ENCODE measurements at regions of chr17 and their contacts with region 1.

Region 1: DNA sequence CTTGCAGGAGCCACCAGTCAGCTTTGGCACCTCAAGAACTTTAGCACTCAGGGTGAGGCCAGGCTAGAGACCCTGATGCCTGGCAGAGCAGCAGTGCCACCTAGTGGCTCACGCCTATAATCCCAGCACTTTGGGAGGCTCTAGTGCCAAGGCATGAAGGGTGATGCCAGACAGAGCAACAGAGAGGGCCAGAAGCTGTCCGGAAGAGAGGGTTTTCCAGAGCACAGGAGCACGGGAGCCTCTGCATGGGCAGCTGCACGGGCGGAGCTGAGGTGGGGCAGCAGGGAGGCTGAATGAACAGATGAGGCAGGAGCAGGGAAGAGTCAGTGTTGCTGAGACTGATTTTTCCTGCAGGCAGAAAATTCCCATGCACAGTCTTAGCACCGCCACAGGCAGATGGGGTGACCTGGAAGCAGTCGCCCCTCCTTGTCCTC is 38.9 kb downstream of the MYH3 start:
- DNase-seq: peak; percentile 57
- ATAC-seq: peak; percentile 84
- H3K4me3 ChIP-seq: no peak overlapping the region
- H3K27ac ChIP-seq: no peak overlapping the region
- H3K4me1 ChIP-seq: peaks cover 3% of the 10 kb centered on the region; the same call in 1 of the 2 replicates
- H3K27me3 ChIP-seq: no peaks in the 10 kb centered on the region
- CTCF ChIP-seq: peak; percentile 85
- POLR2A ChIP-seq: no peak
- RAD21 ChIP-seq: peak; percentile 77

Region 2: DNA sequence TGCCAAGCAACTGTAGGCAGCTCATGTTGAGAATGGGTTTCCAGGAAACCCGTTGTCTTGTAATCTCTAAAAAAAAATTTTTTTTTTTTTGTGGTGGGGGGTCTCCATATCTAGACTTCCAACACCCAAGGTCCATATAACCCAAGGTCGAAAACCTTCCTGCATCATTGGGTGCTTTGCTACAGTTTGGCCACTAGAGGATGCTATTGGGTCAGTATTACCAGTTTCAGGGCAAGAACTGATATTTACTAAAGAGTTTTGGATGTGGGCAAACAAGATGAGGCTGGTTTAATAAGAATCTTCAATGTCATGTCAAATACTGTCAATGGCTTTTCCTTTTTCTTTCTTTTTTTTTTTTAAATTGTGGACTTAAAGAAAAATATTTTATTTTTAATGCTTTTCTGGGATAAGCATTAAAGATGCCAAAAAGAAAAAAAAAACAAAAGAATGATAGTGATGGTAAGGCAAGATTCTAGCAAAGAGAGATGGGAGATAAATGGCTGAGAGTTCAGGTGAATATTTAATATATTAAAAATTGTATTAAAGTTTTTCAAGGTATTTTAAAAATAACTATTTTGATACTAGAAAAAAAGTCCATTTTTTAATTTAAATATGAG is 889.1 kb before region 1 on chr17:
- CTCF ChIA-PET with region 1: no interaction called
- POLR2A ChIA-PET with region 1: no interaction called
- dilution Hi-C with region 1: no loop called
- in situ Hi-C with region 1: loop called (anchors 25 kb)
- intact Hi-C with region 1: loop called (anchors 1 kb)
- DNase-seq: peak; percentile 45
- ATAC-seq: peak; percentile 77
- H3K4me3 ChIP-seq: no peak overlapping the region
- H3K27ac ChIP-seq: no peak overlapping the region
- H3K4me1 ChIP-seq: no peaks in the 10 kb centered on the region
- H3K27me3 ChIP-seq: peaks cover 3% of the 10 kb centered on the region; the same call in 1 of the 2 replicates
- CTCF ChIP-seq: peak; percentile 85
- POLR2A ChIP-seq: no peak
- RAD21 ChIP-seq: peak; percentile 81

Region 3: DNA sequence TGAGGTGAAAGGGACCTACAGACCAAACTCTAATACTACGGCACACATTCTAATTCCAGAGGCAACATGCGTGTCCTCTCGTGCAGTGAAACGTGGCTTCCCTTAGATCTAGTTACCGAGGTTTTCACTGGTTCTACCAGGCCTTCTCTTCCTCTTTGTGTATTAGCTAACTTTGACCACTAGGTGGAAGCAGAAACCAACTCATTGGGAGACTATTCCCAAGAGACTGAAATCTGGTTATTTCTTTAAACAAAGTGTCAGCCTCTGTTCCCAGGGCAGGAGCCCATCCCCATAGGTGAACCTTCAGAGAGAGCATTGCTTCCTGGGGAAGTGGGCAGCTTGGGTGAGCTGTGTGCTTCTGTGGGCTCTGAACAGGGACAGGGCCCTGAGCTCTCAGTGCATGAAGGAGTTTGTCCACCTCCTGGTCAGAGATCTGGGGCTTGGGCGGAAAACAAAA is 693.5 kb before region 1 on chr17:
- CTCF ChIA-PET with region 1: interaction called, 9 read pairs
- POLR2A ChIA-PET with region 1: no interaction called
- dilution Hi-C with region 1: no loop called
- in situ Hi-C with region 1: loop called (anchors 5 kb)
- intact Hi-C with region 1: loop called (anchors 1 kb)
- DNase-seq: peak; percentile 75
- ATAC-seq: peak; percentile 82
- H3K4me3 ChIP-seq: no peak overlapping the region
- H3K27ac ChIP-seq: no peak overlapping the region
- H3K4me1 ChIP-seq: peaks cover 6% of the 10 kb centered on the region; the same call in 1 of the 2 replicates
- H3K27me3 ChIP-seq: no peaks in the 10 kb centered on the region
- CTCF ChIP-seq: peak; percentile 91
- POLR2A ChIP-seq: no peak
- RAD21 ChIP-seq: peak; percentile 91

Region 4: GRCh38 chr17:9968902-9969617 is 649.2 kb before region 1 on chr17:
- CTCF ChIA-PET with region 1: no interaction called
- POLR2A ChIA-PET with region 1: no interaction called
- dilution Hi-C with region 1: no loop called
- in situ Hi-C with region 1: loop called (anchors 10 kb)
- intact Hi-C with region 1: loop called (anchors 1 kb)
- DNase-seq: peak; percentile 91
- ATAC-seq: peak; percentile 70
- H3K4me3 ChIP-seq: no peak overlapping the region
- H3K27ac ChIP-seq: no peak overlapping the region
- H3K4me1 ChIP-seq: peaks cover 15% of the 10 kb centered on the region; the same call in 1 of the 2 replicates
- H3K27me3 ChIP-seq: no peaks in the 10 kb centered on the region
- CTCF ChIP-seq: no peak
- POLR2A ChIP-seq: no peak
- RAD21 ChIP-seq: no peak

Region 5: GRCh38 chr17:10127819-10128425 is 490.3 kb before region 1 on chr17:
- CTCF ChIA-PET with region 1: interaction called, 3 read pairs
- POLR2A ChIA-PET with region 1: no interaction called
- dilution Hi-C with region 1: no loop called
- in situ Hi-C with region 1: no loop called
- intact Hi-C with region 1: loop called (anchors 10 kb)
- DNase-seq: peak; percentile 99
- ATAC-seq: peak; percentile 81
- H3K4me3 ChIP-seq: no peak overlapping the region
- H3K27ac ChIP-seq: peak overlapping the region; percentile 99
- H3K4me1 ChIP-seq: peaks cover 33% of the 10 kb centered on the region
- H3K27me3 ChIP-seq: no peaks in the 10 kb centered on the region
- CTCF ChIP-seq: peak; percentile 28; the same call in 1 of the 2 replicates
- POLR2A ChIP-seq: no peak; the same call in none of the 2 replicates
- RAD21 ChIP-seq: peak; percentile 55

Region 6: GRCh38 chr17:10295728-10296343 is 322.4 kb before region 1 on chr17:
- CTCF ChIA-PET with region 1: interaction called, 3 read pairs
- POLR2A ChIA-PET with region 1: no interaction called
- dilution Hi-C with region 1: no loop called
- in situ Hi-C with region 1: no loop called
- intact Hi-C with region 1: loop called (anchors 10 kb)
- DNase-seq: peak; percentile 33
- ATAC-seq: peak; percentile 73
- H3K4me3 ChIP-seq: no peak overlapping the region
- H3K27ac ChIP-seq: no peak overlapping the region
- H3K4me1 ChIP-seq: no peaks in the 10 kb centered on the region; the same call in 1 of the 2 replicates
- H3K27me3 ChIP-seq: 0 out of 2 replicates have a peak, but pooled peaks cover 2% of the 10 kb centered on the region
- CTCF ChIP-seq: peak; percentile 66
- POLR2A ChIP-seq: no peak
- RAD21 ChIP-seq: peak; percentile 61

Region 7: DNA sequence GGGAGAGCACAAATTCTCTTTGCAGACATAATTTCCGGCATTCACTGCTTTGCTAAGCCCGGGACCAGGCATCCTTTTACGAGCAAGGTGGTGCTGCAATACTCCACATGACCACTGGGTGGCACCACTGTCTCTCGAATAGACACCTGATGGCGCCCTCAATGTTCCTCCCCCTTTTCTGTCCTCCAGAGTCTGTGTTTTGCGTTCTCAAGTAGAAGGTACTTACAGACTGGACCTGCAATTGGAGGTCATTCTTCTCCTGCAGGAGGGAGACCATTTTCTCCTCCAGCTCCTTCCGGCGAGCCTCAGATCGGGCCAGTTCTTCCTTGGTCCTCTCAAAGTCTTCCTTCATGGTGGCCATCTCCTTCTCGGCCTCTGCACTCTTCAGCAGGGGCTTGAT is 290.6 kb before region 1 on chr17:
- CTCF ChIA-PET with region 1: interaction called, 10 read pairs
- POLR2A ChIA-PET with region 1: no interaction called
- dilution Hi-C with region 1: no loop called
- in situ Hi-C with region 1: loop called (anchors 5 kb)
- intact Hi-C with region 1: loop called (anchors 1 kb)
- DNase-seq: peak; percentile 73
- ATAC-seq: peak; percentile 97
- H3K4me3 ChIP-seq: no peak overlapping the region
- H3K27ac ChIP-seq: no peak overlapping the region
- H3K4me1 ChIP-seq: no peaks in the 10 kb centered on the region
- H3K27me3 ChIP-seq: peaks cover 1% of the 10 kb centered on the region; the same call in 1 of the 2 replicates
- CTCF ChIP-seq: peak; percentile 81
- POLR2A ChIP-seq: no peak
- RAD21 ChIP-seq: peak; percentile 83